ENCODE measurements at regions of chr1 and their contacts with region 1.

Region 1: DNA sequence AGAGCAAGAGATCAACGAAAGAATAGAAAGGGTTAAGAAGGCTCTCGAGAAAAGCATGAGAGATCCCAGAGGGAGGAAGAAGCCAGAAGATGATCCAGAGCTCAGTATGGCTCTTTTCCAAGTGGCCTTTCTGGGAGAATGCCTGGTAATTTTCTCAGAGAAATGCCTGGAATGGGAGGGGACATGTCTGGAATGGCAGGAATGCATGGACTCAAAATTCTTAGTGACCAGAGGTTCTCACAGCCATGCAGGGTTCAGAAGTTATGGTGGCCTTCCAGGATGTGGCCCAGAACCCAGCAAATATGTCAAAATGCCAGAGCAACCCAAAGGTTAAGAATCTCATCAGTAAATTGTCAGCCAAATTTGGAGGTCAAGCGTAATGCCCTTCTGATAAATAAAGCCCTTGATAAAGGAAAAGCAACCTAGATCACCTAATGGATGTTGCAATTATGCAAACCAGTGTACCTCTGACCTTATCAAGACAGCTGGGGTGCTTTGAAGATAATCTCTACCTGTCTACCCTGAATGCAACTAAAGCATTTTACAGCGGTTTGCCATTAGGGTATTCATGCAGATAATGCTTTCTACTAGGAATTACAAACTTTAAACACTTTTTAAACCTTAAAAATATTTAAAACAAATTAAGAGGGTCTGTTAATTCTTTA is 53.1 kb downstream of the NBPF6 start:
- DNase-seq: no peak
- H3K4me3 ChIP-seq: no peak overlapping the region
- CTCF ChIP-seq: no peak
- POLR2A ChIP-seq: no peak

Region 2: GRCh38 chr1:108537976-108538375 is 34.8 kb after region 1 on chr1:
- intact Hi-C with region 1: no loop called
- DNase-seq: no peak
- H3K4me3 ChIP-seq: no peak overlapping the region
- CTCF ChIP-seq: no peak
- POLR2A ChIP-seq: no peak

Region 3: DNA sequence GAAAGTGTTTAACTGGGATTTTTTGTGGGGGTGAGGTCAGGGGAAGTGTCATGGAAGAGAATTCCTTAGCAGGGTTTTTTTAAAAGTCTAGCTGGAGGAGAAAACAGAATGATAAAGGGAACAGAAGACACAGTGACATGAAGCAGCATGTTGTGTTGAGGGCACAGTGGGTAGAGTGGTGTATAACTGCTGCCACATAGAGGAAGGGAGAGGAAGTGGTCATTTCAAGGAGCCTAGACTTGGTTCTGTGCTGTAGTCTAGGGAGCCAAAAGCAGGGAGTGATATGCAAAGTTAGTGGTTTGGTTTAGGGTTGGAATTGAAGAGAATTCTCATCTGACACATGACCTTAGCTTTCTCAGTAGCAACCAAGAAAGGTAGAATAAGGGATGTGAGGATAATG is 66.9 kb after region 1 on chr1:
- intact Hi-C with region 1: loop called (anchors 10 kb)
- DNase-seq: no peak
- H3K4me3 ChIP-seq: no peak overlapping the region
- CTCF ChIP-seq: no peak
- POLR2A ChIP-seq: no peak

Region 4: DNA sequence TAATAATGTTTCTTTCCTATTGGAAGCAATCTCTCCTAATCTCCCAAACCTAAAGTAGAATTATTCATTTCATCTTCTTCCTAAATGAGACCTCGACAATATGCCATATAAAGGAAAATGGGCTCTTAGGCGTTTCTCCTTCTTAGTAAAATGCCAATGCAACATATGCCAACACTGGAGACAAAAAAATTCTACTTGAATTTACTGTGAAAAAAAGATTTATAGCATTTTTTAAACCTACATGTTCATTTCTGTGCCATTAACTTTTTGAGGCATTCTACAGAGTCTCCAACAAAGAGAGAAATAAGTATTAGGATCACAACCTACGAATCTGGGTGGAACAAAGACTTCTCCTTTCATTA is 537.4 kb after region 1 on chr1:
- intact Hi-C with region 1: no loop called
- DNase-seq: no peak
- H3K4me3 ChIP-seq: peak overlapping the region; percentile 100
- CTCF ChIP-seq: no peak
- POLR2A ChIP-seq: no peak

Measured in lower leg skin (tissue), 4 donors.